CD4-positive, alpha-beta memory T cell (primary cell): ENCODE measurements at regions of chr17 and their contacts with region 1.

Region 1: GRCh38 chr17:21284319-21285163 is at the start of gene MAP2K3:
- DNase-seq: peak; percentile 91 to 96 (median 92)
- H3K4me3 ChIP-seq: peak within 1 kb of the TSS; percentile 76 to 87
- H3K4me3 Mint-ChIP-seq: peak within 1 kb of the TSS; percentile 95 to 99 (median 96)
- H3K27ac ChIP-seq: peak within 1 kb of the TSS; percentile 94
- H3K27ac Mint-ChIP-seq: peak within 1 kb of the TSS; percentile 97 to 99 (median 98)
- H3K4me1 ChIP-seq: peaks cover 56% of the 10 kb centered on the region
- H3K4me1 Mint-ChIP-seq: peaks cover 34 to 77% (median 51%) of the 10 kb centered on the region in 4 donors
- H3K27me3 ChIP-seq: no peaks in the 10 kb centered on the region
- H3K27me3 Mint-ChIP-seq: no peaks in the 10 kb centered on the region
- total RNA-seq, gene MAP2K3: 52.6 to 63.2 TPM

Region 2: GRCh38 chr17:20908373-20909273 is 375.9 kb before region 1 on chr17:
- CTCF ChIA-PET with region 1: no interaction called
- POLR2A ChIA-PET with region 1: no interaction called
- intact Hi-C with region 1: no loop called
- DNase-seq: peak; percentile 67 to 73 (median 69)
- H3K4me3 ChIP-seq: peak overlapping the region; percentile 61 to 76
- H3K4me3 Mint-ChIP-seq: peak overlapping the region; percentile 50 to 84 (median 79)
- H3K27ac ChIP-seq: peak overlapping the region; percentile 37
- H3K27ac Mint-ChIP-seq: peak overlapping the region in 5 of 7 donors; percentile 31 to 78 (median 52)
- H3K4me1 ChIP-seq: peaks cover 5% of the 10 kb centered on the region
- H3K4me1 Mint-ChIP-seq: peaks cover 0 to 5% (median 4%) of the 10 kb centered on the region in 4 donors
- H3K27me3 ChIP-seq: no peaks in the 10 kb centered on the region
- H3K27me3 Mint-ChIP-seq: peaks cover 0 to 2% of the 10 kb centered on the region in 2 donors

Region 3: GRCh38 chr17:21119247-21119918 is 165.2 kb before region 1 on chr17:
- CTCF ChIA-PET with region 1: interaction called, 69 read pairs
- POLR2A ChIA-PET with region 1: no interaction called
- intact Hi-C with region 1: loop called (anchors 1 kb)
- DNase-seq: peak; percentile 70 to 74 (median 71)
- H3K4me3 ChIP-seq: no peak overlapping the region
- H3K4me3 Mint-ChIP-seq: peak overlapping the region in 2 of 8 donors; percentile 2 to 59
- H3K27ac ChIP-seq: no peak overlapping the region
- H3K27ac Mint-ChIP-seq: peak overlapping the region in 2 of 7 donors; percentile 4 to 35
- H3K4me1 ChIP-seq: peaks cover 3% of the 10 kb centered on the region
- H3K4me1 Mint-ChIP-seq: peaks cover 6 to 14% (median 8%) of the 10 kb centered on the region in 4 donors
- H3K27me3 ChIP-seq: no peaks in the 10 kb centered on the region
- H3K27me3 Mint-ChIP-seq: peaks cover 1 to 2% of the 10 kb centered on the region in 2 donors

Region 4: GRCh38 chr17:21214015-21214776 is 70.3 kb before region 1 on chr17 and contains the start of gene TMEM11:
- CTCF ChIA-PET with region 1: interaction called, 13 read pairs
- POLR2A ChIA-PET with region 1: interaction called, 11 read pairs
- intact Hi-C with region 1: loop called (anchors 1 kb)
- DNase-seq: peak; percentile 94 to 96 (median 95)
- H3K4me3 ChIP-seq: peak within 1 kb of the TSS; percentile 64 to 94
- H3K4me3 Mint-ChIP-seq: peak within 1 kb of the TSS; percentile 89 to 97 (median 92)
- H3K27ac ChIP-seq: peak within 1 kb of the TSS; percentile 92
- H3K27ac Mint-ChIP-seq: peak within 1 kb of the TSS; percentile 82 to 96 (median 93)
- H3K4me1 ChIP-seq: peaks cover 39% of the 10 kb centered on the region
- H3K4me1 Mint-ChIP-seq: peaks cover 31 to 64% (median 47%) of the 10 kb centered on the region in 4 donors
- H3K27me3 ChIP-seq: no peaks in the 10 kb centered on the region
- H3K27me3 Mint-ChIP-seq: no peaks in the 10 kb centered on the region
- total RNA-seq, gene TMEM11: 18.6 to 21.7 TPM

Region 5: GRCh38 chr17:21268596-21269188 is 15.8 kb before region 1 on chr17:
- CTCF ChIA-PET with region 1: interaction called, 24 read pairs
- POLR2A ChIA-PET with region 1: interaction called, 15 read pairs
- intact Hi-C with region 1: no loop called
- DNase-seq: no peak
- H3K4me3 ChIP-seq: peak overlapping the region in 1 of 2 donors; percentile 18
- H3K4me3 Mint-ChIP-seq: peak overlapping the region in 7 of 8 donors; percentile 28 to 70 (median 39)
- H3K27ac ChIP-seq: peak overlapping the region; percentile 53
- H3K27ac Mint-ChIP-seq: peak overlapping the region; percentile 73 to 89 (median 88)
- H3K4me1 ChIP-seq: peaks cover 24% of the 10 kb centered on the region
- H3K4me1 Mint-ChIP-seq: peaks cover 15 to 37% (median 22%) of the 10 kb centered on the region in 4 donors
- H3K27me3 ChIP-seq: no peaks in the 10 kb centered on the region
- H3K27me3 Mint-ChIP-seq: peaks cover 0 to 3% of the 10 kb centered on the region in 2 donors

Region 6: GRCh38 chr17:21457051-21458026 is 172.8 kb after region 1 on chr17:
- CTCF ChIA-PET with region 1: interaction called, 9 read pairs
- POLR2A ChIA-PET with region 1: interaction called, 5 read pairs
- intact Hi-C with region 1: loop called (anchors 2 kb)
- DNase-seq: peak; percentile 87 to 92 (median 88)
- H3K4me3 ChIP-seq: no peak overlapping the region
- H3K4me3 Mint-ChIP-seq: peak overlapping the region in 5 of 8 donors; percentile 23 to 61 (median 49)
- H3K27ac ChIP-seq: no peak overlapping the region
- H3K27ac Mint-ChIP-seq: peak overlapping the region in 6 of 7 donors; percentile 60 to 90 (median 82)
- H3K4me1 ChIP-seq: peaks cover 11% of the 10 kb centered on the region
- H3K4me1 Mint-ChIP-seq: peaks cover 13 to 22% (median 17%) of the 10 kb centered on the region in 4 donors
- H3K27me3 ChIP-seq: no peaks in the 10 kb centered on the region
- H3K27me3 Mint-ChIP-seq: peaks cover 8 to 13% of the 10 kb centered on the region in 2 donors